Naive thymus-derived CD4-positive, alpha-beta T cell (primary cell): ENCODE measurements at regions of chr1 and their contacts with region 1.

Region 1: GRCh38 chr1:161933592-161934588 is 89.8 kb downstream of the OLFML2B start:
- DNase-seq: peak in 7 of 9 donors; percentile 31 to 73 (median 68)
- ATAC-seq: peak; percentile 91
- H3K4me3 ChIP-seq: peak overlapping the region; percentile 7
- H3K4me3 Mint-ChIP-seq: peak overlapping the region; percentile 51 to 80 (median 68)
- H3K27ac ChIP-seq: peak overlapping the region; percentile 46
- H3K27ac Mint-ChIP-seq: peak overlapping the region; percentile 44 to 95 (median 88)
- H3K4me1 ChIP-seq: peaks cover 25 to 51% of the 10 kb centered on the region in 2 donors
- H3K4me1 Mint-ChIP-seq: peaks cover 16 to 73% (median 33%) of the 10 kb centered on the region in 7 donors
- H3K27me3 ChIP-seq: no peaks in the 10 kb centered on the region
- H3K27me3 Mint-ChIP-seq: no peaks in the 10 kb centered on the region

Region 2: GRCh38 chr1:161921990-161922389 is 11.9 kb before region 1 on chr1:
- CTCF ChIA-PET with region 1: no interaction called
- POLR2A ChIA-PET with region 1: interaction called, 25 read pairs
- intact Hi-C with region 1: loop called in 1 of 2 experiments (anchors 1 kb)
- DNase-seq: no peak
- ATAC-seq: no peak
- H3K4me3 ChIP-seq: no peak overlapping the region
- H3K4me3 Mint-ChIP-seq: peak overlapping the region in 2 of 10 donors; percentile 8 to 15
- H3K27ac ChIP-seq: no peak overlapping the region
- H3K27ac Mint-ChIP-seq: peak overlapping the region in 3 of 9 donors; percentile 9 to 34 (median 17)
- H3K4me1 ChIP-seq: peaks cover 15% of the 10 kb centered on the region in 2 donors
- H3K4me1 Mint-ChIP-seq: peaks cover 10 to 83% (median 60%) of the 10 kb centered on the region in 7 donors
- H3K27me3 ChIP-seq: no peaks in the 10 kb centered on the region
- H3K27me3 Mint-ChIP-seq: no peaks in the 10 kb centered on the region

Region 3: GRCh38 chr1:161954050-161954449 is 20.2 kb after region 1 on chr1:
- CTCF ChIA-PET with region 1: no interaction called
- POLR2A ChIA-PET with region 1: interaction called, 3 read pairs
- intact Hi-C with region 1: loop called in 1 of 2 experiments (anchors 2 kb)
- DNase-seq: no peak
- ATAC-seq: no peak
- H3K4me3 ChIP-seq: no peak overlapping the region
- H3K4me3 Mint-ChIP-seq: peak overlapping the region in 8 of 10 donors; percentile 33 to 73 (median 54)
- H3K27ac ChIP-seq: no peak overlapping the region
- H3K27ac Mint-ChIP-seq: peak overlapping the region in 8 of 9 donors; percentile 37 to 82 (median 64)
- H3K4me1 ChIP-seq: peaks cover 0 to 16% of the 10 kb centered on the region in 2 donors
- H3K4me1 Mint-ChIP-seq: peaks cover 18 to 68% (median 43%) of the 10 kb centered on the region in 7 donors
- H3K27me3 ChIP-seq: no peaks in the 10 kb centered on the region
- H3K27me3 Mint-ChIP-seq: no peaks in the 10 kb centered on the region

Region 4: DNA sequence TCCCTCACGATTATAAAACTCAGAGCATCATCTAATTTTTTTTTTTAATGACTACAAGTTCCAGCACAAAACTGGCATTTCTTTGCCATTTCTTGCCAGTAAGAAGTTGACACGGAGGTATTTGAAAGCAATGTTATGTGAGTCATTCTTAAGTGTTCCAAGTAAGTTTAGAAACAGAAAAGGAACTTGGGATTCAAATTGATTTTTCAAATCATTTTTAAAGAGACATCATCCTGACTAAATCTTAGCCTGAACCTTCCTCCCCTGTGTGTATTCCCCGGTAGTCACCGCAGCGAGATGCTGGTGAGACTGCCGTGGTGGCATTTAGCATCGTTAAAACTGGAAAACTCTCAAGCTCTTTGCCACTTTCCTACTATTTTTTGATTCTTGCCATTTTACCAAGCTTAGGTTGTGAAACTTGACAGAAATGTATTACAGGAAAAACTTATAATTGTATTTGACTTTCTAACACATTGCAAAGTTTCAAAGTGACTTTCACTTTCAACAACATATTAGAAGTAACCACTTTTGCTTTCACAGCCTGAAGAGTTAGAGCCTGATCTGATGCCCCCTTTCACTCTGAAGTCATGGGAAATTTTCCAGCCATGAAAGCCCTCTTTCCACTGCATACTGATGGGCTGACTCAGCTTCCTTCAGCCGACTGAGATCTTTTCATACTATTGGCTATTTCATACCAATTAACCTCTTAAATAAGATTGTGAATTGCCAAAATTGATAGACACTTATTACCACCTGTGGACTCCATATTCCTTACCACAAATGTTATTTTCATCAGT is 28.4 kb after region 1 on chr1:
- CTCF ChIA-PET with region 1: interaction called, 4 read pairs
- POLR2A ChIA-PET with region 1: no interaction called
- intact Hi-C with region 1: loop called (anchors 2 kb)
- DNase-seq: peak in 3 of 9 donors; percentile 8 to 14 (median 10)
- ATAC-seq: peak; percentile 38
- H3K4me3 ChIP-seq: peak overlapping the region; percentile 27
- H3K4me3 Mint-ChIP-seq: peak overlapping the region; percentile 63 to 92 (median 85)
- H3K27ac ChIP-seq: peak overlapping the region; percentile 58
- H3K27ac Mint-ChIP-seq: peak overlapping the region; percentile 85 to 94 (median 88)
- H3K4me1 ChIP-seq: peaks cover 0 to 11% of the 10 kb centered on the region in 2 donors
- H3K4me1 Mint-ChIP-seq: peaks cover 6 to 47% (median 30%) of the 10 kb centered on the region in 7 donors
- H3K27me3 ChIP-seq: no peaks in the 10 kb centered on the region
- H3K27me3 Mint-ChIP-seq: no peaks in the 10 kb centered on the region

Region 5: GRCh38 chr1:162444903-162445302 is 511.0 kb after region 1 on chr1:
- CTCF ChIA-PET with region 1: no interaction called
- POLR2A ChIA-PET with region 1: no interaction called
- intact Hi-C with region 1: no loop called
- DNase-seq: no peak
- ATAC-seq: no peak
- H3K4me3 ChIP-seq: no peak overlapping the region
- H3K4me3 Mint-ChIP-seq: no peak overlapping the region
- H3K27ac ChIP-seq: no peak overlapping the region
- H3K27ac Mint-ChIP-seq: no peak overlapping the region
- H3K4me1 ChIP-seq: no peaks in the 10 kb centered on the region
- H3K4me1 Mint-ChIP-seq: peaks cover 0 to 2% (median 0%) of the 10 kb centered on the region in 7 donors
- H3K27me3 ChIP-seq: no peaks in the 10 kb centered on the region
- H3K27me3 Mint-ChIP-seq: peaks cover 25 to 72% (median 47%) of the 10 kb centered on the region in 5 donors